ENCODE measurements at regions of chrX and their contacts with region 1.

Region 1: DNA sequence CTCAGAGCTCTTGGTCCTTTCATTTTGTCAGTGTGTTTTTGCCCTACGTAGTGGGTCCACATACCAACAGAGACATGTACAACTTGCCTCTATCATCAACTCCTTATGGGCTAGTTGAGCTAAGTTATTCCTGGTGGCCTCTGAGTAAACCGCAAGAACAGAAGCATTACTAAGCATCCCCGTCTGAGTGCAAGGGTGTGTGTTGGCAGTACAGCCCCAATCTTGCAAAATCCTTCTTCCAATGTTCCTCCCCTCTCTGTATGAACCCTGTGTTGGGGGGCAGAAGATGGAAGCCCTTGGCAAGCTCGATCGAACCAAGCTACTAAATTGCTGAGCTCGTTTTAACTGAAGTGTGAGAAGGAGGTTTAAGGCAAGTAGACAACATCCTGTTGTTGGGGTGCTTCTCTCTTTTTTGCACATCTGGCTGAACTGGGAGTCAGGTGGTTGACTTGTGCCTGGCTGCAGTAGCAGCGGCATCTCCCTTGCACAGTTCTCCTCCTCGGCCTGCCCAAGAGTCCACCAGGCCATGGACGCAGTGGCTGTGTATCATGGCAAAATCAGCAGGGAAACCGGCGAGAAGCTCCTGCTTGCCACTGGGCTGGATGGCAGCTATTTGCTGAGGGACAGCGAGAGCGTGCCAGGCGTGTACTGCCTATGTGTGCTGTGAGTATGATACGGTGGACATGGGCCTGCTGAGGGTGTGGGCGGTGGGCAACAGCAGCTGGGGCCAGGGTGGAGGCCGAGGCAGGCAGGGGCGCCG is at the start of gene SH2D1A:
- DNase-seq: peak in 8 of 9 donors; percentile 20 to 50 (median 34)
- ATAC-seq: peak; percentile 70
- H3K4me3 ChIP-seq: peak within 1 kb of the TSS; percentile 62
- H3K4me3 Mint-ChIP-seq: peak within 1 kb of the TSS; percentile 79 to 99 (median 96)
- H3K27ac ChIP-seq: peak within 1 kb of the TSS; percentile 72
- H3K27ac Mint-ChIP-seq: peak within 1 kb of the TSS; percentile 85 to 98 (median 95)
- H3K4me1 ChIP-seq: peaks cover 36 to 47% of the 10 kb centered on the region in 2 donors
- H3K4me1 Mint-ChIP-seq: peaks cover 12 to 51% (median 44%) of the 10 kb centered on the region in 7 donors
- H3K27me3 ChIP-seq: no peaks in the 10 kb centered on the region
- H3K27me3 Mint-ChIP-seq: no peaks in the 10 kb centered on the region
- total RNA-seq, gene SH2D1A: 23.8 to 48.2 (median 37.9) TPM

Region 2: GRCh38 chrX:123732670-123733363 is 613.5 kb before region 1 on chrX and contains the start of gene THOC2:
- CTCF ChIA-PET with region 1: no interaction called
- POLR2A ChIA-PET with region 1: no interaction called
- intact Hi-C with region 1: loop called in 1 of 2 experiments (anchors 10 kb)
- DNase-seq: peak; percentile 47 to 77 (median 69)
- ATAC-seq: peak; percentile 97
- H3K4me3 ChIP-seq: peak within 1 kb of the TSS; percentile 82
- H3K4me3 Mint-ChIP-seq: peak within 1 kb of the TSS; percentile 84 to 98 (median 94)
- H3K27ac ChIP-seq: peak within 1 kb of the TSS; percentile 83
- H3K27ac Mint-ChIP-seq: peak within 1 kb of the TSS; percentile 84 to 95 (median 93)
- H3K4me1 ChIP-seq: peaks cover 0 to 9% of the 10 kb centered on the region in 2 donors
- H3K4me1 Mint-ChIP-seq: peaks cover 14 to 49% (median 40%) of the 10 kb centered on the region in 7 donors
- H3K27me3 ChIP-seq: no peaks in the 10 kb centered on the region
- H3K27me3 Mint-ChIP-seq: no peaks in the 10 kb centered on the region
- total RNA-seq, gene THOC2: 78.7 to 124 (median 92.4) TPM

Region 3: DNA sequence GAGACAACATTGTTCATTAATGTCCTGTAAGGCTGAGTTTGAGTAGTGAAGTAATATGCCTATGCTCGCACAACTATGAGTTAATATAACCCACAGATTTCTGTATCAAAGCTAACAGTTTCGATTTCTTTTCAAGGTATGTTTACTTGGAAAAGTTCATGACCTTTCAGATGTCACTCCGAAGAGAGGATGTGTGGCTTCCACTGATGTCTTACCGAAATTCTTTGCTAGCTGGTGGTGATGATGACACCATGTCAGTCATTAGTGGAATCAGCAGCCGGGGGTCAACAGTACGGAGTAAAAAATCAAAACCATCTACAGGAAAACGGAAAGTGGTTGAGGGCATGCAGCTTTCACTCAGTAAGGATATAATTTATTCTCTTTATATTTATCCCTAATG is 259.9 kb before region 1 on chrX:
- CTCF ChIA-PET with region 1: no interaction called
- POLR2A ChIA-PET with region 1: no interaction called
- intact Hi-C with region 1: loop called (anchors 5 to 10 kb)
- DNase-seq: peak in 8 of 9 donors; percentile 21 to 78 (median 64)
- ATAC-seq: peak; percentile 97
- H3K4me3 ChIP-seq: no peak overlapping the region
- H3K4me3 Mint-ChIP-seq: peak overlapping the region in 9 of 10 donors; percentile 4 to 84 (median 68)
- H3K27ac ChIP-seq: peak overlapping the region; percentile 59
- H3K27ac Mint-ChIP-seq: peak overlapping the region; percentile 85 to 94 (median 91)
- H3K4me1 ChIP-seq: peaks cover 0 to 6% of the 10 kb centered on the region in 2 donors
- H3K4me1 Mint-ChIP-seq: peaks cover 7 to 41% (median 31%) of the 10 kb centered on the region in 7 donors
- H3K27me3 ChIP-seq: no peaks in the 10 kb centered on the region
- H3K27me3 Mint-ChIP-seq: no peaks in the 10 kb centered on the region

Region 4: DNA sequence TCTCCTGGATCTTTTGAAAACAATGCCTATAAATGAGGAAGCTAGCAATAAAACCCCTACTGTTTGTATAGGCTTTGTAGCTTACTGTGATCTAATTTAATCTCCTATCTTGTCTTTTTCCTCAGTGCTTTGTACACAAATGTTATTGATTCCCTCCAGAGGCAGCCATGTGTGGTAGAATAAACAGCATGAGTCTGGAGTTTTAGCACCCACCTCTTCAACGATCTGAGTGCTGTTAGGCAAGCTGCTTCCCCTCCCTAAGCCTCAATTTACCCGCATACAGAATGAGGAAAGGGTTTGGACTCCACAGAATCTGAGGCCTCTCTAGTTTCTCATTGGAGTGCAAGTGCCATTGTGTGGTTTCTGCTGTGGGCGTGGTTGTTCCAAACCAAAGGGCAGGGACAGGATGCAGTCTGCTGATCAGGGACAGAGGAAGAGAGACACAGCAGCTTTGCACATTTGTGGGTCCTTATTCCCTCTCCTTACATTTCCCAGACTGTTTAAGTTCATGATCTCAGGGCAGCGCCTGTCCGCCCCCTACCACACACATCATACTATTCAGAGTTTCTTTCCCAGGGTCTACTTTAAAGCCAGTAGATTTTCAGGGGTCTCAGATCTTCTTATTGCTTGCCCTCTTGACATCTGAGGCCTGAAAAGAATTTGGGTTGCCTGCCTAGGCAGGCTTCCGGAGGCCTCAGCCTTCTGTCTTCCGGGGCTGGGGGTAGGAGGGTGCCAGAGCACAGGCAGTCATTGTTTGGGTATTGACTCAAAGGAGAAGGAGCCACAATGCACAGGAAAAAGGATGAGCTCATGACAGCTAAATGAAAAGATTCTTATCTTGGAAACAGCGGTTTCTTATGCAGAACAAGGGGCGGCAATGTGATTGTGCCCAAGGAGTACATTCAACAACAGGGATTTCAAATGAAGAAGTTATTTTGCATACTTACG is 128.7 kb before region 1 on chrX:
- CTCF ChIA-PET with region 1: no interaction called
- POLR2A ChIA-PET with region 1: interaction called, 17 read pairs
- intact Hi-C with region 1: loop called (anchors 2 kb)
- DNase-seq: peak; percentile 11 to 84 (median 78)
- ATAC-seq: peak; percentile 97
- H3K4me3 ChIP-seq: peak overlapping the region; percentile 46
- H3K4me3 Mint-ChIP-seq: peak overlapping the region; percentile 56 to 82 (median 76)
- H3K27ac ChIP-seq: peak overlapping the region; percentile 72
- H3K27ac Mint-ChIP-seq: peak overlapping the region; percentile 76 to 98 (median 93)
- H3K4me1 ChIP-seq: peaks cover 52 to 62% of the 10 kb centered on the region in 2 donors
- H3K4me1 Mint-ChIP-seq: peaks cover 40 to 95% (median 84%) of the 10 kb centered on the region in 7 donors
- H3K27me3 ChIP-seq: no peaks in the 10 kb centered on the region
- H3K27me3 Mint-ChIP-seq: no peaks in the 10 kb centered on the region

Region 5: DNA sequence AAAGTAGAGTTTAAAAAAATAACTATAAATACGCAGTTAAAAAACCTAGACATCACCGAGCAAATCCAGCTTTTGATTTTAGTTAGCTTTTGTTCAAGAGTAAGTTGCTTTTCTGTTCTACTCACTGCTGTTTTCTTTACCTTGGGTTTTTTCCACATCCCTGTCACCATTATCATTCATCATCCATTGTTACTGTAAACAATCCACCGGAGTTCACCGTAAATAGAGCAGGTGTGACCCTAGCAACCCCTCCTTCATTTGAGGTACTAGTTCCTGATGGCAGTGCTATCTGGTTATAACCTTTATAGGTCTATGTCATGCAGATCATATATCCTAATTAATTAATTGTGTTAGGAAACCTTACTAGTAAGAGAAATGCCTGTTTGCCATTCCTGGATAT is 56.9 kb before region 1 on chrX:
- CTCF ChIA-PET with region 1: no interaction called
- POLR2A ChIA-PET with region 1: no interaction called
- intact Hi-C with region 1: loop called in 1 of 2 experiments (anchors 10 kb)
- DNase-seq: no peak
- ATAC-seq: no peak
- H3K4me3 ChIP-seq: no peak overlapping the region
- H3K4me3 Mint-ChIP-seq: no peak overlapping the region
- H3K27ac ChIP-seq: no peak overlapping the region
- H3K27ac Mint-ChIP-seq: no peak overlapping the region
- H3K4me1 ChIP-seq: no peaks in the 10 kb centered on the region
- H3K4me1 Mint-ChIP-seq: no peaks in the 10 kb centered on the region
- H3K27me3 ChIP-seq: no peaks in the 10 kb centered on the region
- H3K27me3 Mint-ChIP-seq: no peaks in the 10 kb centered on the region

Region 6: GRCh38 chrX:124358800-124359383 is 12.6 kb after region 1 on chrX:
- CTCF ChIA-PET with region 1: no interaction called
- POLR2A ChIA-PET with region 1: interaction called, 7 read pairs
- intact Hi-C with region 1: loop called (anchors 1 kb)
- DNase-seq: peak in 6 of 9 donors; percentile 27 to 56 (median 36)
- ATAC-seq: peak; percentile 71
- H3K4me3 ChIP-seq: peak overlapping the region; percentile 43
- H3K4me3 Mint-ChIP-seq: peak overlapping the region; percentile 12 to 84 (median 58)
- H3K27ac ChIP-seq: peak overlapping the region; percentile 37
- H3K27ac Mint-ChIP-seq: peak overlapping the region; percentile 21 to 92 (median 70)
- H3K4me1 ChIP-seq: peaks cover 19 to 25% of the 10 kb centered on the region in 2 donors
- H3K4me1 Mint-ChIP-seq: peaks cover 29 to 66% (median 64%) of the 10 kb centered on the region in 7 donors
- H3K27me3 ChIP-seq: no peaks in the 10 kb centered on the region
- H3K27me3 Mint-ChIP-seq: no peaks in the 10 kb centered on the region

Region 7: DNA sequence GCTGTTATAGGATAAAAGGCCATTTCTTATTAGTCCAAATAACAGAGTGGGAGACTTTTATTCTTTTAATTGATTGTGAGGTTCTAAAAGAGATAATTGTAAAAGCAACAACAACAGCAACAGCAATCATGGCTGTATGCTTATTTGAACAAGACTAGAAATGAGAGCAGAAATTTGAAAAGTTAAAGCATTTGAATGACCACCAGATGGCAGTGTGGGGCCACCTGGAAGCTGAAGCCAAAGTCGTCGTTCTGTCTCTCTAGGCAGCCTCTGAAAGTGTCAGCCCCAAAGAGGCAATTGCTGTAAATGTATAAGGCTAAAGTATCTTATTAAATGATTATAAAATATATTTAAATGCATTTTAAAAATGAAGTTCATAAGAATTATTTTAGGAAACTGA is 42.3 kb after region 1 on chrX:
- CTCF ChIA-PET with region 1: no interaction called
- POLR2A ChIA-PET with region 1: no interaction called
- intact Hi-C with region 1: no loop called
- DNase-seq: peak in 8 of 9 donors; percentile 7 to 68 (median 53)
- ATAC-seq: peak; percentile 76
- H3K4me3 ChIP-seq: no peak overlapping the region
- H3K4me3 Mint-ChIP-seq: no peak overlapping the region
- H3K27ac ChIP-seq: no peak overlapping the region
- H3K27ac Mint-ChIP-seq: peak overlapping the region in 2 of 9 donors; percentile 32 to 62
- H3K4me1 ChIP-seq: no peaks in the 10 kb centered on the region
- H3K4me1 Mint-ChIP-seq: peaks cover 1 to 30% (median 19%) of the 10 kb centered on the region in 7 donors
- H3K27me3 ChIP-seq: no peaks in the 10 kb centered on the region
- H3K27me3 Mint-ChIP-seq: no peaks in the 10 kb centered on the region

Measured in naive thymus-derived CD4-positive, alpha-beta T cell (primary cell).